PC-9 (cell line): ENCODE measurements at regions of chr7 and their contacts with region 1.

Region 1: GRCh38 chr7:99210264-99210970 is 2.5 kb upstream of the KPNA7 start:
- DNase-seq: peak; percentile 52 to 99
- H3K4me3 ChIP-seq: peak overlapping the region; percentile 20; the same call in 1 of the 2 replicates
- H3K27ac ChIP-seq: peak overlapping the region; percentile 100
- H3K4me1 ChIP-seq: peaks cover 70% of the 10 kb centered on the region
- H3K27me3 ChIP-seq: no peaks in the 10 kb centered on the region
- CTCF ChIP-seq: no peak

Region 2: DNA sequence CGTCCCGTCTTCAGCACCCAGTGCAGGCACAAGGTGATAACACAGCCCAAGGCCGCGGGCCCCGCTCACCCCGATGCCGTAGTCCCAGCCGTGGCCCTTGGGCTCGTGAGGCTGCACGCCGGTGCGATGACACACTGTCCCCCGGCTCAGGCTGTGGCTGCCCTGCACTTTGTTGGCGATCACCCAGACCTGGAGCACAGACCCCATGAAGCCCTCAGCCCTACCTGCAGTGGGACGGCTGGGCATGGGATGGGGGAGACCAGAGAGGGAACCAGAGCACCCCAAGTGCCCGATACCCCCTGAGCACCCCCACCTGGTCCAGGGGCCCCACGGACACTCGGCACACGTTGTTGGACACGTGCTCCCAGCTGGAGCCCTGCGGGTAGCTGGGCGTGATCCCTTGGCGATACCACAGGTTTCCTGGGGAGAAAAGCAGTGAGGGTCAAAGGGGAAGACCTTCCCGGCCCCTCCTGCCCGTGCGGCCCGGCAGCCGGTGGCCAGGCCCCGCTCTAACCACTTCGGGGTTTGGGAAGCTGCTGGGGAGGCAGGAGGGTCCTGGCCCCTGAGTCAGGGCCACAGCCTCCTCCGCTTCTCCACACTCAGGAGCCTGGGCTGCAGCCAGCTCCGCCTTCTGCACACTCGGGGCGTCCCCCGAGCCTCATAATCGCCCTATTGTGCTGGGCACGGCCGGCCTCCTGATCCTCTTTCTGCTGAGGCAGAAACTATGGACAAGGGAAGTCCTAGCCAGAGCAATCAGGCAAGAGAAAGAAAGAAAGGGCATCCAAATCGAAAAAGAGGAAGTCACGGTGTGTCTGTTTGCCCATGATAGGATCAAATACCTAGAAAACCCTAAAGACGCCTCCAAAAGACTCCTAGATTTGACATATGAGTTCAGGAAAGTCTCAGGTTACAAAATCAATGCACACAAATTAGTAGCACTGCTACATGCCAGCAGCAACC is 992.5 kb before region 1 on chr7:
- CTCF ChIA-PET with region 1: no interaction called
- POLR2A ChIA-PET with region 1: no interaction called
- intact Hi-C with region 1: no loop called
- DNase-seq: no peak
- H3K4me3 ChIP-seq: no peak overlapping the region
- H3K27ac ChIP-seq: no peak overlapping the region
- H3K4me1 ChIP-seq: no peaks in the 10 kb centered on the region
- H3K27me3 ChIP-seq: no peaks in the 10 kb centered on the region
- CTCF ChIP-seq: no peak

Region 3: DNA sequence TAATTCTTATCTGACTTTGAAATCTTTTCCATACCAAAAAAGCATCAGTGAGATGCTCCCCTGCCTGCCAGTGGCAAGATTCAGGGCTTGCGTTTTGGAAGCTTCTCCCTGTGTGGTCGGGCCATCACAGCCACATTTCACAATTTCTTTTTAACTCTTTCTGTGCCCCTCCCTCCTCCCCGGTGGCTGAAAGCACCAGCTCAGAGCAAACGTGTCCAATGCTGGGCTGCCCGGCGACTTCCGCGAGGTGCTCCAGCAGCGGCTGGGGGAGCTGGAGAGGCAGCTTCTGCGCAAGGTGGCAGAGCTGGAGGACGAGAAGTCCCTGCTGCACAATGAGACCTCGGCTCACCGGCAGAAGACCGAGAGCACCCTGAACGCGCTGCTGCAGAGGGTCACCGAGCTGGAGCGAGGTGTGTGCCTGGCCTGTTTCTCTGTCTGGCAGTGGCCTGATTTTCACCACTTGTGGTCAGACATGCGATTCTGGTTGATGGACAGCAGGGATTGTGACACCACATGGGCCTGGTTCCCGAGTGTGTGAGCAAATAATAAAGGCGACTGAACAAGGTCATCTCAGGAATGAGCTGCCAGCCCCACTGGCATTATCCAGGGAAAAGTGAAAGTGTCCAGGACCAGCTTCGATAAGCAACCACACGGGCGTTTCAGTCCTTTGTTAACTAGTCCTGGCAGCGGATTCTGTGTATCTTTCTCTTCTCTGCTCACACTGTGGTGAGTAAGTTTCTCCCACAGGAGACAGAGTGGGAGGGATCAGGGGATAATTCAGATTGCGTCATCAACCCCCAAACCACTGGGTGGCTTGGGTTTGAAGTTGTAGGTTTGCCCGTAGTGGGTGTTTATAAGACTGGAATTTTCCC is 590.7 kb before region 1 on chr7:
- CTCF ChIA-PET with region 1: interaction called, 15 read pairs
- POLR2A ChIA-PET with region 1: no interaction called
- intact Hi-C with region 1: no loop called
- DNase-seq: no peak
- H3K4me3 ChIP-seq: no peak overlapping the region
- H3K27ac ChIP-seq: no peak overlapping the region
- H3K4me1 ChIP-seq: no peaks in the 10 kb centered on the region
- H3K27me3 ChIP-seq: peaks cover 62% of the 10 kb centered on the region
- CTCF ChIP-seq: no peak

Region 4: GRCh38 chr7:99167072-99167471 is 43.3 kb before region 1 on chr7:
- CTCF ChIA-PET with region 1: interaction called, 5 read pairs
- POLR2A ChIA-PET with region 1: interaction called, 17 read pairs
- intact Hi-C with region 1: loop called (anchors 1 kb)
- DNase-seq: no peak
- H3K4me3 ChIP-seq: no peak overlapping the region
- H3K27ac ChIP-seq: no peak overlapping the region
- H3K4me1 ChIP-seq: peaks cover 13% of the 10 kb centered on the region
- H3K27me3 ChIP-seq: no peaks in the 10 kb centered on the region
- CTCF ChIP-seq: no peak

Region 5: DNA sequence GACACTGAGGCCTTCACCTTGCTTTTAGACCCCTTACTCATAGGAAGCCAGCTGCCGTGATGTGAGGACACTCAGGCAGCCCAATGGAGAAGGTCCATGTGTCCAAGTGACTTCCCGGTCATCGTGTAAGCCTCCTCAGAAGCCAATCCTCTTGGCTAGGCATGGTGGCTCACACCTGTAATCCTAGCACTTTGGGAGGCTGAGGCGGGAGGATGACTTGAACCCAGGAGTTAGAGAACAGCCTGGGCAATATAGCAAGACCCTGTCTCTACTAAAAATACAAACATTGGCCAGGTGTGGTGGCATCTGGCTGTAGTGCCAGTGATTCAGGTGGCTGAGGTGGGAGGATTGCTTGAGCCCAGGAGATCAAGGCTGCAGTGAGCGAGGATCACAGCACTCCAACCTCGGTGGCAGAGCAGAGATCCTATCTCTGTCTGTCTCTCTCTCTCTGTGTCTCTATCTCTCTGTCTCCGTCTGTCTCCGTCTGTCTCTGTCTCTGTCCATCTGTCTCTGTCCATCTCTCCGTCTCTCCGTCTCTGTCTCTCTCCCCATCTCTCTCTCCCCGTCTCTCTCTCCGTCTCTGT is 30.3 kb before region 1 on chr7:
- CTCF ChIA-PET with region 1: no interaction called
- POLR2A ChIA-PET with region 1: no interaction called
- intact Hi-C with region 1: no loop called
- DNase-seq: no peak
- H3K4me3 ChIP-seq: no peak overlapping the region
- H3K27ac ChIP-seq: no peak overlapping the region
- H3K4me1 ChIP-seq: no peaks in the 10 kb centered on the region
- H3K27me3 ChIP-seq: no peaks in the 10 kb centered on the region
- CTCF ChIP-seq: no peak

Region 6: DNA sequence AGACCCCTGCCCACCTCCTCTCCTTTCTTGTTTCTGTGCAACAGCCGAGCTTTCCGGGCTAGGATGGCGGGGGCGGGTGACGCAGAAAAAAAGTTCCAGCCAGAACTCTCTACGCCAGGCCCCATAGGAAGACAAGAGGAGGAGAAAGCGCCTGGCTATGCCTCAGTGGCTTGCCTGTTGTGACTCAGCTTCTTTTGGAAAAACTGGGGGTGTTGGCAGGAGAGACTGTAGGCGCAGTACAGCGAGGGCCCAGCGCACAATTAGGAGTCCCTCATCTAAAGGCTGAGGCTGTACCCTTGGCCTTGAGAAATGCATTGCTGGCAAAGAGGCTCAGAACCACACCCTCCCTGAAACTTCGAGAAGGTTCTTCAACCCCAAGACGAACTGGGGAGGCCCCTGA is 25.5 kb after region 1 on chr7:
- CTCF ChIA-PET with region 1: no interaction called
- POLR2A ChIA-PET with region 1: no interaction called
- intact Hi-C with region 1: no loop called
- DNase-seq: no peak
- H3K4me3 ChIP-seq: no peak overlapping the region
- H3K27ac ChIP-seq: no peak overlapping the region
- H3K4me1 ChIP-seq: no peaks in the 10 kb centered on the region
- H3K27me3 ChIP-seq: no peaks in the 10 kb centered on the region
- CTCF ChIP-seq: no peak

Region 7: DNA sequence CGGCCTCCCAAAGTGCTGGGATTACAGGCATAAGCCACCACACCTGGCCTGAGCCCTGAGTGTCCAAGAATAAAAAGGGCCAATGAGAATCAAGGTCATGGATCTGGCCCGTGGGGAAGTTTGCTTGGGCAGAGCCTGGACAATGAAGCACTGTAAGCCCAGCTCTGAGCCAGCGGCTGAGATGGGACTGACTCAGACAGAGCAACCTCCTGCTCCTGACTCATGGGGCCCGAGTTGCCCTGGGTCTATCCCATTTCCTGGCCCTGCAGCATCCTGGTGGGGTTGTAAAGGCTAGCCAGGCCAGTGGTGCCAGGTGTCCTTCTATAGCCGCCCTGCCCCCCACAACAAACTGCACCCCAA is 57.0 kb after region 1 on chr7:
- CTCF ChIA-PET with region 1: no interaction called
- POLR2A ChIA-PET with region 1: interaction called, 13 read pairs
- intact Hi-C with region 1: no loop called
- DNase-seq: peak; percentile 79 to 93
- H3K4me3 ChIP-seq: no peak overlapping the region
- H3K27ac ChIP-seq: peak overlapping the region; percentile 90
- H3K4me1 ChIP-seq: peaks cover 41% of the 10 kb centered on the region
- H3K27me3 ChIP-seq: no peaks in the 10 kb centered on the region
- CTCF ChIP-seq: no peak

Region 8: DNA sequence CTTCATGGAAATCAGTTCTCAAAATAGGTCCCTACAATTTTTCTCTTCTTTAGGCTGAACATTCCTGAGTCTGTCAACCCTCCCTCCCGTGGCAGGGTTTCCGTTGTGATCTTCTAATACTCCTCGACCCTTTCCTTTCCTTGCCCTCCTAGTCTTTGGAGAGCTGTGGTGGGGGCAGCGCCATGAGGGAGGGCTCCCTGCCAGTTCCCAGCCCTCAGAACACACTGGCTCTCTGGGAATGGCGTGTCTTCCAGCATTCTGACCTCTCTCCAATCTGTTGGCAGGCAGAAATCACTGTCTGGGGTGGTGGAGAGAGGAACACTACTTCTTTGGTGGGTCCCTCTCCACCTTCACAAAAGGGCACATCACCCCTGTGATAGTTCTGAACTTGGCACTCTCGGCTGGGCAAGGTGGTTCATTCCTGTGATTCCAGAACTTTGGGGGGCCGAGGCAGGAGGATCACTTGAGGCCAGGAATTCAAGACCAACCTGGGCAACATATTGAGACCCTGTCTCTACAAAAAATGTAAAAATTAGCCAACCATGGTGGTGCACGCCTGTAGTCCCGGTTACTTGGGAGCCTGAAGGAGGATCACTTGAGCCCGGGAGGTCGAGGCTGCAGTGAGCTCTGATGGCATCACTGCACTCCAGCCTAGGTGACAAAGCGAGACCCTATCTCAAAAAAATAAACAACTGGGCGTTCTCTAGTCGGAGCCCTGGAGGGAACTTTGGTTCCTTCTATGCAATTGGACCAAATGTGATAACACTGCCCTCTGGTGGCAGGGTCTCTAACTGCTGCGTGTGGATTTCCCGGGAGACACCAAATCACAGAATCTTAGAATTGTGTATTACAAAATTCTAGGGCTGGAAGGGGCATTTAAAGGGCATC is 102.1 kb after region 1 on chr7:
- CTCF ChIA-PET with region 1: interaction called, 14 read pairs
- POLR2A ChIA-PET with region 1: no interaction called
- intact Hi-C with region 1: loop called (anchors 5 kb)
- DNase-seq: peak; percentile 57 to 72
- H3K4me3 ChIP-seq: no peak overlapping the region
- H3K27ac ChIP-seq: no peak overlapping the region
- H3K4me1 ChIP-seq: peaks cover 7% of the 10 kb centered on the region
- H3K27me3 ChIP-seq: no peaks in the 10 kb centered on the region
- CTCF ChIP-seq: peak; percentile 95

Region 9: DNA sequence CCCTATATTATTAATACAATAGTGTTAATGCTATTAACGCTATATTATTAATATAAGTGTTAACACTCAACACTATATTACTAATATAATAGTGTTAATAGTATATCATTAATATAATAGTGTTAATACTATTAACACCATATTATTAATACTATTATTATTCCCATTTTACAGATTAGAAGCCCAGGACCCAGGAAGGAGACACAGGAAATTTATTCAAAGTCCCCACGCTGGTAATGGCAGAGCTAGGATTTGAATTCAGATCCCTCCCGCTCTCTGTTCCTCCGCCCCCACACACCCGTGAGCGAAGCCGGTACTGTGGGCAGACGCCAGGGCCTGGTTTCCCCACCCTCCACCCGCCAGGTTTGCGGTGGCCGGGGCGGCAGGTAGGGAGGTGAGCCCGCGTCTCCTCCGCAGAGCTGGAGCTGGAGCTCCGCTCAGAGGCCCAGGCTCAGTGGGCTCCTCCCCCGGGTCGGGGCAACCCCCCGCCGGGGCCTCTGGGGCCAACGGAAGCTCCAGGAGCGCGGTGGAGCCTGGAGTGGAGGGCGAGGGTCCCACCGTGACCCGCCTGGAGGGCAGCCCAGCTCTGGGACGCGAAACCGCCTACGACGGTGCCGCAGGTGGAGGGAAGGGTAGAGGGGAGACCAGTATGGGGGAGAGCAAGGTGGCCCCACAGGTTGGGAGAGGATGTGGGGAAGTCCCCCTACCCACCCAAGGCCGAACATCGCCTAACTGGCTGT is 387.5 kb after region 1 on chr7 and contains the start of gene TMEM225B:
- CTCF ChIA-PET with region 1: no interaction called
- POLR2A ChIA-PET with region 1: no interaction called
- intact Hi-C with region 1: no loop called
- DNase-seq: no peak
- H3K4me3 ChIP-seq: no peak within 1 kb of the TSS
- H3K27ac ChIP-seq: no peak within 1 kb of the TSS
- H3K4me1 ChIP-seq: no peaks in the 10 kb centered on the region
- H3K27me3 ChIP-seq: 0 out of 2 replicates have a peak, but pooled peaks cover 6% of the 10 kb centered on the region
- CTCF ChIP-seq: no peak
- total RNA-seq, gene TMEM225B: 1.5 and 1.8 TPM in 2 replicates